PC-3 (cell line): ENCODE measurements at regions of chr18 and their contacts with region 1.

Region 1: DNA sequence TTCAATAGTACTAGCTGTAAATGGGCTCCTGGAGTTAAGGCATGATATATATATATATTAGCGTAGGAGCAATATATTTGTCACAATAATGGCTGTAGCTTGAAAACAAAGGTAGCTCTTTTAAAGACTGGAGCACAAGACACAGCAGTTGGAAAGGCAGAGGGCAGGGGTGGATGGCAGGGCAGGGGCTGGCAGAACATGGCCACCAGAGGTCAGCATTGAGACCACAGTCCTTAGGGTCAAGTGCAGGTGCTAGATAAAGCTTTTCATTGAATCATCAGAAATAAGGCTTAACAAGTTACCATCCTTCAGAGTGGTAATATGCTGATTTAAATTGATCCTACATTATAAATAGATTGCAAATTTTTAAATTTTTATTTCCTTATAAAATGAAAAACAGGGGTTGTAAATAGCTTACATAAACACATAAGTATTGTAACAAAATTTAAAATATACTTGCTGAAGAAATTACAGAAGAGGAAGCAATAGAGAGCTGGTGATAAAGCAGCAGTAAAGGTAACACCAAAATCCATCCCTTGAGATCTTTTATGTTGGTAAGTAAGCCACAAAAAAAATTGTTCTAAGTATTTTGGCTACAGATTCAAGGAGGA is 161.2 kb upstream of the PIEZO2 start:
- DNase-seq: peak; percentile 58
- ATAC-seq: peak; percentile 82
- H3K4me3 ChIP-seq: no peak overlapping the region
- H3K27ac ChIP-seq: no peak overlapping the region
- H3K4me1 ChIP-seq: no peaks in the 10 kb centered on the region
- H3K27me3 ChIP-seq: peaks cover 31% of the 10 kb centered on the region
- CTCF ChIP-seq: peak; percentile 89

Region 2: DNA sequence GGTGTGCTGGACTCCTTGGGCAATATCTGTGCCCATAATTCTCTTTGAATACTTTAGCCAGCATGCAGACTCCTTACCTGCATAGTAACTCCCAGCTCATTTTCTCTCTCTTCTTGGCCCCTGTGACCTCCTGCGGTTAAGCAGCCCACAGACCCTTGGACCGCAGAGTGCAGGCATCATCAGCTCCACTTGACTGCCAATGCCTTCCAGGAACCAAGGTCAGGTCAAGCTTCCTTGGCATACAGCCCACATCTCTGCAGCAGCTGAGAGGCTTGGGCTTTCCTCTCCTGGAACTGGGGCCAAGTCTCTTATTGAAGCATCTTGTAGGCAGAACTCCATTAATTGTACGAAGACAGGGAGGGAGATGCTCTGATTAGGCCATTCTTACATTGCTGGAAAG is 31.1 kb before region 1 on chr18:
- CTCF ChIA-PET with region 1: no interaction called
- POLR2A ChIA-PET with region 1: no interaction called
- intact Hi-C with region 1: no loop called
- DNase-seq: no peak
- ATAC-seq: no peak
- H3K4me3 ChIP-seq: no peak overlapping the region
- H3K27ac ChIP-seq: no peak overlapping the region
- H3K4me1 ChIP-seq: no peaks in the 10 kb centered on the region
- H3K27me3 ChIP-seq: peaks cover 24% of the 10 kb centered on the region
- CTCF ChIP-seq: no peak

Region 3: GRCh38 chr18:11407940-11408339 is 97.4 kb after region 1 on chr18:
- CTCF ChIA-PET with region 1: no interaction called
- POLR2A ChIA-PET with region 1: no interaction called
- intact Hi-C with region 1: no loop called
- DNase-seq: no peak
- ATAC-seq: no peak
- H3K4me3 ChIP-seq: no peak overlapping the region
- H3K27ac ChIP-seq: no peak overlapping the region
- H3K4me1 ChIP-seq: no peaks in the 10 kb centered on the region
- H3K27me3 ChIP-seq: peaks cover 57% of the 10 kb centered on the region
- CTCF ChIP-seq: no peak

Region 4: GRCh38 chr18:11512096-11513030 is 201.8 kb after region 1 on chr18:
- CTCF ChIA-PET with region 1: no interaction called
- POLR2A ChIA-PET with region 1: no interaction called
- intact Hi-C with region 1: loop called (anchors 1 kb)
- DNase-seq: peak; percentile 23
- ATAC-seq: peak; percentile 45
- H3K4me3 ChIP-seq: no peak overlapping the region
- H3K27ac ChIP-seq: no peak overlapping the region
- H3K4me1 ChIP-seq: no peaks in the 10 kb centered on the region
- H3K27me3 ChIP-seq: peaks cover 52% of the 10 kb centered on the region
- CTCF ChIP-seq: peak; percentile 48

Region 5: DNA sequence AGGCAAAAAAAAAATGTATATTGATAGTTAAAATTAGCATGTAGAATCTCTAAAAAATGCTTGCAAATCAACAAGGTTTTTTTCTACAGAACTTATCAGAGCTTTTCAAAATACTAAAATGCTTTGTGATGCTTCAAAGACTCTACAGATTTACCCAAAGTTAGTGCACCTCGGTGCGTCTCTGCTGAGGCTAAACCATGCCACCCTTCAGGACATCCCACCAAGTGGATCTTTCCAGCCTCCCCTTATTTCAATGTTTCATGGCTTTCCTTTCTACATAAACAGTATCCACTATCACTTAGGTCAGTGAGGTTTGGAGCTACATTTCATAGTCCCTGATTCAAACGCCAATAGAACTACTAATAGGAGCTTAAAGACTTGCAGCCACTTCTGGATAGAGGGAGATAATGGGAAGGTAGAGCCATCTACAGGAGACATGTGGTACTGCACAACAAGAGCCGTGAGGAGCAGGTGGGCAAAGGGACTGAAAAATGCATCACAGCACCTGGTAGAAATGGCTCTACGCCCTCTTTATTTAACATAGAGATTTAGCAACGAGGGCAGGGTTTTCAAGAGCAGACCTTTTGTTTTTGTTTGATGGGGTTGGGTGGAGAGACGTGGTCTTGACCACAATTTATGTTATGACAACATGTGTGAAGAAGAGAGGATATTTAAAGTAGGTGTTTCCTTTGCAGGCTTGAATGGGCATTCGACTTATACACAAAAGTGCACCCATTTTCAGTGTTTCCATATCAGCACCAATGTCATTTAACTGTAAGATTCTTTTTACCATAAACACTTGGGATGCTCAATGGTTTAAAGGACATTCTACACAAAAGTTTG is 242.7 kb after region 1 on chr18:
- CTCF ChIA-PET with region 1: interaction called, 14 read pairs
- POLR2A ChIA-PET with region 1: no interaction called
- intact Hi-C with region 1: loop called (anchors 1 kb)
- DNase-seq: peak; percentile 78
- ATAC-seq: peak; percentile 89
- H3K4me3 ChIP-seq: no peak overlapping the region
- H3K27ac ChIP-seq: no peak overlapping the region
- H3K4me1 ChIP-seq: no peaks in the 10 kb centered on the region
- H3K27me3 ChIP-seq: peaks cover 61% of the 10 kb centered on the region
- CTCF ChIP-seq: peak; percentile 92